H1 (cell line): ENCODE measurements at regions of chr9 and their contacts with region 1.

Region 1: DNA sequence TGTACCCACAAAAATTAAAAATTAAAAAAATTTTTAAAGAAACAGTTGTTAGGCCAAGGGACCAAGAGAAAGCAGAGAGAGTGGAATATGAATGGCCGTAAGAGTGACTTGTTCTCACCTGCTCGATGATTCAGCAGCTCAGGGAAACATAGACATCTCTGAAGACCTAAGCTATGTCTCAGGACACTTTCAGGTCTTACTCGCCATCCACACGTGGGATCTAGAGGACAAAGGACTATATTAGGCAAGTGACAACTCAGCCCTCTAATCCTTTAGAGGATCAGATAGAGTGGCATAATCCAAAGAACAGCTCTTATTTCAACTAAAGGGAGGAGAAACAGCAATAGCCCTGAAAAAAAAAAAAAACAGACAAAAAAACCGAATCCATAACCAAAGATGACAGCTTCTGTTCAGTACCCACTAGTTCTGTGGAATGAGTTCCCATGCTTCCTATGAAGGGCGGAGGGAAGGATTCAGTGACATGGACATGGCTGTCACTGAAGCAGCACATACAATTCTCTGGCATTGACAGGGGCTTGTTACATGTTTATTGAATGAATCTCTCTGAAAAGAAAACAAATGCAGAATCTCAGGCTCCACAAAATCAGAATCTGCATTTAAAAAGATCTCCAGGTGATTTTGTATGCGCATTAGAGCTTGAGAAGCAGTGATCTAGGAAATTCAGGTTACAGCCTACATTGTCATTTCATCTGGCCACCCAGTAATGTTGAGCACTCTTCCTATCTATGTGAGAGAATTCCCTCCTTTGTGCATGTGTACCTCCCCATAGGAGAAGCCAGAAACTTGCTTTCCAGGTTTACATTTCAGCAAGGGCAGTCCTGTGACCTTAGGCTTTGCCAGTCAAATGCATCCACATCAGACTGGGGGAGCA is 96.0 kb downstream of the KIAA1958 start:
- DNase-seq: no peak
- H3K4me3 ChIP-seq: peak overlapping the region in 1 of 4 experiments; percentile 18; a peak in 1 of 8 replicates
- H3K27ac ChIP-seq: no peak overlapping the region
- H3K4me1 ChIP-seq: peaks cover 4 to 18% (median 17%) of the 10 kb centered on the region in 4 experiments; a peak in 6 of 7 replicates
- H3K27me3 ChIP-seq: no peaks in the 10 kb centered on the region
- CTCF ChIP-seq: no peak
- EP300 ChIP-seq: no peak
- POLR2A ChIP-seq: no peak
- RAD21 ChIP-seq: no peak

Region 2: GRCh38 chr9:112572416-112572815 is 10.2 kb before region 1 on chr9:
- CTCF ChIA-PET with region 1: interaction called, 10 read pairs
- POLR2A ChIA-PET with region 1: no interaction called
- DNase-seq: no peak
- H3K4me3 ChIP-seq: no peak overlapping the region
- H3K27ac ChIP-seq: no peak overlapping the region
- H3K4me1 ChIP-seq: peaks cover 0 to 3% (median 0%) of the 10 kb centered on the region in 4 experiments; a peak in 1 of 7 replicates
- H3K27me3 ChIP-seq: no peaks in the 10 kb centered on the region
- CTCF ChIP-seq: peak in 1 of 3 experiments; percentile 41; a peak in 1 of 4 replicates
- EP300 ChIP-seq: no peak
- POLR2A ChIP-seq: no peak
- RAD21 ChIP-seq: 0 out of 4 replicates have a peak, but pooled peaks of 1 of the 2 experiments have one; percentile 14

Region 3: GRCh38 chr9:112601636-112602035 is 19.0 kb after region 1 on chr9:
- CTCF ChIA-PET with region 1: interaction called, 14 read pairs
- POLR2A ChIA-PET with region 1: interaction called, 3 read pairs
- DNase-seq: no peak
- H3K4me3 ChIP-seq: no peak overlapping the region
- H3K27ac ChIP-seq: no peak overlapping the region
- H3K4me1 ChIP-seq: no peaks in the 10 kb centered on the region
- H3K27me3 ChIP-seq: no peaks in the 10 kb centered on the region
- CTCF ChIP-seq: no peak
- EP300 ChIP-seq: no peak
- POLR2A ChIP-seq: no peak
- RAD21 ChIP-seq: no peak